HepG2 (cell line): ENCODE measurements at regions of chr6 and their contacts with region 1.

Region 1: GRCh38 chr6:10528170-10528981 is 7.2 kb downstream of the GCNT2 start:
- DNase-seq: peak; percentile 94
- ATAC-seq: peak; percentile 92
- H3K4me3 ChIP-seq: peak overlapping the region; percentile 72 to 79 (median 73)
- H3K27ac ChIP-seq: peak overlapping the region; percentile 90
- H3K4me1 ChIP-seq: peaks cover 40% of the 10 kb centered on the region
- H3K27me3 ChIP-seq: no peaks in the 10 kb centered on the region; a peak in 1 of 5 replicates
- CTCF ChIP-seq: no peak
- EP300 ChIP-seq: peak; percentile 48 to 64; a peak in 3 of 4 replicates
- POLR2A ChIP-seq: peak; percentile 63 to 96
- RAD21 ChIP-seq: no peak; the same call in 1 of the 2 replicates

Region 2: GRCh38 chr6:9380568-9380967 is 1147.8 kb before region 1 on chr6:
- CTCF ChIA-PET with region 1: no interaction called
- POLR2A ChIA-PET with region 1: no interaction called
- in situ Hi-C with region 1: no loop called
- intact Hi-C with region 1: no loop called
- DNase-seq: no peak
- ATAC-seq: no peak
- H3K4me3 ChIP-seq: no peak overlapping the region
- H3K27ac ChIP-seq: no peak overlapping the region
- H3K4me1 ChIP-seq: no peaks in the 10 kb centered on the region
- H3K27me3 ChIP-seq: no peaks in the 10 kb centered on the region
- CTCF ChIP-seq: no peak
- EP300 ChIP-seq: no peak
- POLR2A ChIP-seq: no peak
- RAD21 ChIP-seq: no peak

Region 3: DNA sequence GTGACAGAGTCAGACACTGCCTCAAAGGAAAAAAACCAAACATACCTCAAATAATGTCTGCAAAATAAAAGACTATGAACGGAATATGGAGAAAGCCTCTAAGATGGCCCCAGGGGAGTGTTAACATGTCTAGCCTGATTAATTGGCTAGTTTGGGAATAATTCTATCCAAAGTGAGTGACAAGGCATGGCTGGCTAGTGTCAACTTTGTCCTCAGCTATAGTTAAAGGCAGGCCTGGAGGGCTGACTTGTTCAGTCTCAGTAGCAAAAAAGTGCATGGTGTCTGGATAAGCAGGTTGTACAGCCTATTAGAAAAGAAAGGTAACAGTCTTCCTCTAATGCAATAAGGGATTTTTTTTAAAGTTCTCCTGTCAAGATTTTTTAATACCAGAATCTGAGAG is 25.5 kb after region 1 on chr6:
- CTCF ChIA-PET with region 1: no interaction called
- POLR2A ChIA-PET with region 1: no interaction called
- in situ Hi-C with region 1: no loop called
- intact Hi-C with region 1: no loop called
- DNase-seq: no peak
- ATAC-seq: no peak
- H3K4me3 ChIP-seq: no peak overlapping the region
- H3K27ac ChIP-seq: no peak overlapping the region
- H3K4me1 ChIP-seq: no peaks in the 10 kb centered on the region
- H3K27me3 ChIP-seq: no peaks in the 10 kb centered on the region
- CTCF ChIP-seq: no peak
- EP300 ChIP-seq: no peak
- POLR2A ChIP-seq: no peak
- RAD21 ChIP-seq: no peak

Region 4: DNA sequence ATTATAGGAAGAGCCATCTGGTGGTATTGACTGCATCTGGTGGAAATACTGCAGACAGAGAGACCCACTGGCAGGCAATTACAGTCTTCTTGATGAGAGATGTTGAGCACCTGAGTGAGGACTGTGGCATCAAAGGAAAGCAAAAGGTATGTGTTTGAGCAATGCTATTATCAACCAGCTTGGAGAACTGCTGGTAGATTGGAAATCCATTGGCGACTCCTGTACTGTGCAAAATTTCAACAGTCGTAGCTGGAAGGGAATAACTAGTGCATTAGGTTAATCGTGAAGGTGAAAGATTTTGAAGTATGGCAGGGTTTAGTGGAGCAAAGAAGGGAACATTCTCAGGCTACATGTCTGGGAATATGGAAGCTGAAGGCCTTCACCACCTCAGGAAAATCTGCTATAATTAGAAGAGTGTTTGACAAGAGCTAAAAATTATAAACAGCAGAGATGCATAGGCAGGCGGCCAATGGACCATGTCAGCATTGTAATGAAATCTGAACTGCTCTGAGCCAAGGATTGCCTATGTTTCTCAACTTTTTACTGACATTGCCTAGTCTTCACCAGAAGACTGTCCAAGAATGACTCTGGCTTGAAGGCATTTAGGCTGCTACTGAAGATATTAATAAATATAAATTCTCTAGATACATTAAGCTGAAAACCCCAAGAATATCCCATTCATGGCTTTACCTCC is 81.8 kb after region 1 on chr6:
- CTCF ChIA-PET with region 1: no interaction called
- POLR2A ChIA-PET with region 1: no interaction called
- in situ Hi-C with region 1: no loop called
- intact Hi-C with region 1: loop called (anchors 5 kb)
- DNase-seq: no peak
- ATAC-seq: no peak
- H3K4me3 ChIP-seq: no peak overlapping the region
- H3K27ac ChIP-seq: no peak overlapping the region
- H3K4me1 ChIP-seq: peaks cover 14% of the 10 kb centered on the region
- H3K27me3 ChIP-seq: no peaks in the 10 kb centered on the region; a peak in 1 of 5 replicates
- CTCF ChIP-seq: no peak
- EP300 ChIP-seq: no peak
- POLR2A ChIP-seq: no peak
- RAD21 ChIP-seq: no peak